ENCODE measurements at regions of chr1 and their contacts with region 1.

Region 1: DNA sequence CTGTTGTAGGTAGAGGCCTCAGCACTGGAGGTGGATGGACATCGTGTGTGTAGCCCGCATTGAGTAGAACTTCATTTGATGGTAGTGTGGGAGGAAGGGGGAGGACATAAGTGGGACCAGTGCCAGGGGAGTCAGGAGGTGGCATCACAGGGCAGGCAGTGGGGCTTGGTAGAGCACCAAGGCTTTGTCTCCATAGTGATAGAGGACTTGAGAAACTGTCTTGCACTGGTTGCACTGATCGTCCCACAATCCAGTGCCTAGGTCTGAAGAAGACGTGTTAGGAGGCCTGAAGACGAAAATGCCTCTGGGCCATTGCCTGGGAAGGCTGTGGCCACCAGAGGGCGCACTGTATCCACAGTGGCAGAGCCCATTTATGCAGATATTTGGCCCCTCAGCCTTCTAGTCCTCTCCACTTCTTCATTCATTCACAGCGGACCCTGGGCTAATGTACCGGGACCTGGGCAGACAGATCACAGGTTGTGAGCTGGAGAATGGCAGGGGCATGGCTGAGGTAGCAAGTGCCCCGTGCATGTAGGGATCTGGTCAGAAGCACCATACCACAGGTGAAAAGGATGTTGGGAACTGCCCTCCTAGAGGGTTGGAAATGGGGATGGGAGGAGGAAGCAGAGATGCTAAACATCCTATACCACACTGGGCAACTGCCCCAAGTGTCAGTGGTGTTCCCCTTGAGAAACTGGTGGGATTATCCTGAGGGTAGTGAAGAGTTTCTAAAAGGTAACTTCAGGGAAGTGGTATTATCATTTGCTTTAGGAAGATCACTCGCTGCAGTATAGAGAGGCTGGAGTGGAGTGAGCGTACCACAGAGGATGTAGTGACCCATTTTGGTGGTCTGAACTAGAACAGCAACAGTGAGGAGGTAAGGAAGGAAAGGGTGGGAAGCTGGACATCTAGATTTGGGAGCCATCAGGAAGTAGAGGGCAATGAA is 95.3 kb downstream of the PIK3R3 start:
- DNase-seq: peak; percentile 71
- H3K4me3 Mint-ChIP-seq: no peak overlapping the region
- H3K27ac Mint-ChIP-seq: no peak overlapping the region
- H3K4me1 Mint-ChIP-seq: no peaks in the 10 kb centered on the region
- H3K27me3 Mint-ChIP-seq: no peaks in the 10 kb centered on the region

Region 2: DNA sequence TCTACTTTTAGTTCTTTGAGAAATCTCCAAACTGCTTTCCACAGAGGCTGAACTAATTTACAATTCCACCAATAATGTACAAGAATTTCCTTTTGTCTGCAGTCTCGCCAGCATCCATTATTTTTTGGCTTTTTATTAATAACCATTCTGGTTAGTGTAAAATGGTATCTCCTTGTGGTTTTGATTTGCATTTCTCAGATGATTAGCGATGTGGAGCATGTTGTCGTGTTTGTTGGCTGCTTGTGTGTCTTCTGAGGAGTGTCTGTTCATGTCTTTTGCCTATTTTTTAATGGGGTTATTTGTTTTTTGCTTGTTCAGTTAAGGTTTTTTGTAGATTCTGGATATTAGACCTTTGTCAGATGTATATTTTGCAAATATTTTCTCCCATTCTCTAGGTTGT is 102.2 kb before region 1 on chr1:
- intact Hi-C with region 1: no loop called
- DNase-seq: no peak
- H3K4me3 Mint-ChIP-seq: no peak overlapping the region
- H3K27ac Mint-ChIP-seq: no peak overlapping the region
- H3K4me1 Mint-ChIP-seq: no peaks in the 10 kb centered on the region
- H3K27me3 Mint-ChIP-seq: no peaks in the 10 kb centered on the region

Region 3: DNA sequence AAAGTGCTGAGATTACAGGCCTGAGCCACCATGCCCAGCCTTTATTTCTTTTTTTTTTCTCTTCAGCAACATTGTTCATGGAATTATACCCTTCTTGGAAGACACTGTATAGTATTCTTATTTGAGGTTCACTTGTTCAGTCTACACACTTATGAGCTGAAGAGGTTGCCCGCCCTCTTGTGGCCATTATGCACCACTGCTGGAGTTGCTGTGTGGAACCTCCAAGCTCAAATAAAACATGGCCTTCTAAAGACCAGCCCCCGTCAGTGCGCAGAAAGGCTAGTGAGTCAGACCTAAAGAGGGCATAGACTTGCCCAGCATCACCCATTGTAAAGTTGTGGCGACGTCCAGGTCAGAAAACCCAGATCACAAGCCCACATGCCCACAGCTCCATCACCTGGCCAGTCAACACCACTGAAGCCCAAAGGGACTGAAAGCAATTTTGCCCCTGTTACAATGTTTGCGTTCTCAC is 186.3 kb after region 1 on chr1:
- intact Hi-C with region 1: loop called (anchors 1 kb)
- DNase-seq: peak; percentile 49
- H3K4me3 Mint-ChIP-seq: no peak overlapping the region
- H3K27ac Mint-ChIP-seq: no peak overlapping the region
- H3K4me1 Mint-ChIP-seq: no peaks in the 10 kb centered on the region
- H3K27me3 Mint-ChIP-seq: peaks cover 4% of the 10 kb centered on the region

Region 4: DNA sequence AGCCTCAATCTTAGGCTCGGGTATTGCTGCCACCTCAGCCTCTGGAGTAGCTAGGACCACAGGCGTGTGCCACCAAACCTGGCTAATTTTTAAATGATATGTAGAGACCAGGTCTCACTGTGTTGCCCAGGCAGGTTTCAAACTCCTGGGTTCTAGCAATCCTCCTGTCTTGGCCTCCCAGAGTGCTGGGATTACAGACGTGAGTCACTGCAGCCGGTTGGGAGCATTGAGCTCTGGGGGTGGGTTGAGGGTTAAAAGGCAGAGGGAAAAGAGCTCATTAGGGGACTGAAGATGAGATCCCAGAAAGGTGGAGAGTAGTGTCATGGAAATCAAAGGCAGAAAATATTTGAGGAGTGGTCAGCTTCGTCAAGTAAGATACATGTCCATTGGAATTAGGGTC is 217.5 kb after region 1 on chr1:
- intact Hi-C with region 1: no loop called
- DNase-seq: no peak
- H3K4me3 Mint-ChIP-seq: no peak overlapping the region
- H3K27ac Mint-ChIP-seq: no peak overlapping the region
- H3K4me1 Mint-ChIP-seq: peaks cover 14% of the 10 kb centered on the region
- H3K27me3 Mint-ChIP-seq: no peaks in the 10 kb centered on the region

Measured in activated T-helper 2 cell treated with anti-CD3 and anti-CD28 coated beads, Interferon-gamma antibody, Interleukin-2, Interleukin-4, amounts not matched to agents 10 μg/mL and 5 μg/mL and 100 μg/mL, durations not matched to agents 14 hours and 24 hours and 36 hours (primary cell).